ENCODE measurements at regions of chr6 and their contacts with region 1.

Region 1: DNA sequence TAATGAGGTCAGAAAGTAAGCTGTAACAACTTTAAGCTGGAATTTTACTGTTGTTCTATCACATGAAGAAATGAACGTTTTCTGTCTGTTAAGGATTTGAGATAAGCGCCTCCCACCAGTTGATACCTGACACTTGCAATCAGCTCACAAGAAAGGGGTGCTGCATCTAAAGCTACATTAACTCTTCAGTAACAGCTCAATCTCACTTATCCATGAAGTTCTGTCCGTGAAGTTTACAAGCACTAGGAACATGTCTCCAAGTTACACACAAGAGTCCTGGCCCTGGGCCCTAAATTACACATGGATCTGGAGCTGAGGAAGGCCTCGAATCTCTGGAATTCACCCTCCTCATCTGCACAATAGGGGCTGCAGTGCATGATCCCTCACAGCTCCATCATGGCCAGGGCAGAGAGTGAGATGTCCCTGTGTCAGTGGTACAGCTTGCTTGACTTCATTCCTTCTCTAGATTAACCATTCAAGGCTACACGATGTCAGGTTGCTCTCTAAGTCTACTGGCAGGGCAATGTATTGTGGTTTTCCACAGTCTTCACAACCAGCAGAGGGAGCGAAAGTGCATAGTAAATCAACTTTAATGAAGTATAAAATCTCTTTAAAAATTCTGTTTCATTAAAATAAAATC is 182.4 kb upstream of the MCHR2 start:
- DNase-seq: peak; percentile 54
- H3K4me3 ChIP-seq: no peak overlapping the region
- H3K27ac ChIP-seq: no peak overlapping the region
- H3K4me1 ChIP-seq: no peaks in the 10 kb centered on the region
- H3K27me3 ChIP-seq: no peaks in the 10 kb centered on the region
- CTCF ChIP-seq: peak; percentile 29 to 33
- POLR2A ChIP-seq: no peak

Region 2: DNA sequence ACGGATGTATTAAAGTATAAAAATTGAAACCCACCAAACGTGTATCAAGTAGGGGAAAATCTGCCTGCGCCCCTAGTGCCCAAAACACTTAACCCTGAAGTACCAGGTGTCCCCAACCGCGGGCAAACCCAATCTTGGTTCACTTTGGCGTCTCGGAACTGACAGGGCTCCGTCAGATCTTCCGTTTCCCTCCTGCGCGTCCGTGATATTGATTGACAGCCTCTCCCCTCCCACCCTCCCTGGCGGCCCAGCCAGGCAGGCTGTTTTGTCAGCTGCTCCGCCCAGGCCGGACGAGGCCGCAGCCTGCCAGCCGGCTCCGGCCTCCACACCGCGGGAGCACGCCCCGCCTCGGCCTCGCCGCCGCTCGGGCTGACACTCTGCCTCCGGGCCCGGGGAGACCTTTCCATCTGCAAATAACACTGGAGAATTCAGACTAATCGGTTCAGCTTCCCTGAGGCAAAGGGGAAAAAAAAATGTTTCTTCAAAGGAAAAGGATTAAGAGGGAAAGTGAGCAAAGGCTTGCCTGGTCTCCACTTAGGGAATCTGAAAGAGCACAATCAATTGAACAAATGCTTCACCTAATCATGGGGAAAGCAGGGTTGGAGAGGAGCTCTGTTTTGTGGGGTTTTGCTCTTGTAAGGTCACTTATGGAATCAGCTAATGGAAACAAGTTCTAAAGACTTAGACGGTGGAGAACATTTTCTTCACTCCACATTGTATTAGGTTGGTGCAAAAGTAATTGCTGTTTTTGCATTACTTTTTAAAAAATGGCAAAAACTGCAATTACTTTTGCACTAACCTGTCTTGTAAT is 52.6 kb after region 1 on chr6:
- CTCF ChIA-PET with region 1: interaction called, 11 read pairs
- POLR2A ChIA-PET with region 1: no interaction called
- dilution Hi-C with region 1: no loop called
- intact Hi-C with region 1: no loop called
- DNase-seq: peak; percentile 86
- H3K4me3 ChIP-seq: peak overlapping the region; percentile 10 to 65 (median 28)
- H3K27ac ChIP-seq: peak overlapping the region; percentile 81
- H3K4me1 ChIP-seq: peaks cover 35% of the 10 kb centered on the region
- H3K27me3 ChIP-seq: no peaks in the 10 kb centered on the region
- CTCF ChIP-seq: no peak
- POLR2A ChIP-seq: peak; percentile 70

Region 3: DNA sequence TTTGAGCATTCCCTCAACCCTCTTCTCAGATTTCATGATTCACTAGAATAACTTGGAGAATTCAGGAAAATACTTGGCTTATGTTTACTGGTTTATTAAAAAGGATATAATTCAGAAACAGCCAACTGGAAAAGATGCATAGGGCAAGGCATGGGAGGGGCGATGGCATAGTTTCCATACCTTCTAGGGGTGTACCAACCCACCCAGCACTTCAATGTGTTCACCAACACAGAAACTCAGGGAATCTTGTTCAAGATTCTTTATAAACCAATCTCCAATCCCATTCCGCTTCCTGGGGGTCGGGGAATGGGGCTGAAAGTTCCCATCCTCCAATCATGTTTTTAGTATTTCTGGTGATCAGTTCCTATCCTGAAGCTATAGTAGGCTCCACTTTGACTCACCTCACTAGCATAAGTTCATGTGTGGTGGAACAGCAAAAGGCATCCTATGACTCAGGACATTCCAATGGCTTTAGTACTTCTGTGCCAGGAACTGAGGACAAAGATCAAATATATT is 123.8 kb after region 1 on chr6:
- CTCF ChIA-PET with region 1: interaction called, 10 read pairs
- POLR2A ChIA-PET with region 1: no interaction called
- dilution Hi-C with region 1: no loop called
- intact Hi-C with region 1: loop called (anchors 5 kb)
- DNase-seq: peak; percentile 85
- H3K4me3 ChIP-seq: no peak overlapping the region
- H3K27ac ChIP-seq: peak overlapping the region; percentile 100
- H3K4me1 ChIP-seq: peaks cover 74% of the 10 kb centered on the region
- H3K27me3 ChIP-seq: no peaks in the 10 kb centered on the region
- CTCF ChIP-seq: no peak
- POLR2A ChIP-seq: peak; percentile 29

Region 4: DNA sequence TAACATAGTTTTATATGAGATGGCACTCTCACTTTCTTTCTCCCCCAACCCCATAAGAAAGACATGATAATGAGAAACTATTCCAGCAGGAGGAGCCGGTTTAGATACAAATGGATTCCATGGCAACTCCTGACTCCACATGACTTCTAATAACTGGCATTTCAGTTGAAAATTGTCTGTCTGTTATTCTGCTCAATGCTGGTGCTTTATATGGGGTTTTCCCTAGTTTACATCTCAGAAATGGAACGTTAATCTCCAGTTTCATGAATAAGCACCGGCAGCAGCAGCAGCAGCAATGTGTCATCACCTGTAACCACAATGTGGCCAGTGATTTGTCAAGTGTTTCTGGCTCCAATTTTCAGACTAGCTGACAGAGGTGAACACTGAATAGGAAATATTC is 296.2 kb after region 1 on chr6:
- CTCF ChIA-PET with region 1: interaction called, 14 read pairs
- POLR2A ChIA-PET with region 1: no interaction called
- dilution Hi-C with region 1: no loop called
- intact Hi-C with region 1: no loop called
- DNase-seq: no peak
- H3K4me3 ChIP-seq: no peak overlapping the region
- H3K27ac ChIP-seq: no peak overlapping the region
- H3K4me1 ChIP-seq: no peaks in the 10 kb centered on the region
- H3K27me3 ChIP-seq: peaks cover 38 to 62% of the 10 kb centered on the region in 2 experiments
- CTCF ChIP-seq: no peak
- POLR2A ChIP-seq: no peak

Region 5: GRCh38 chr6:100657678-100658330 is 481.4 kb after region 1 on chr6:
- CTCF ChIA-PET with region 1: no interaction called
- POLR2A ChIA-PET with region 1: no interaction called
- dilution Hi-C with region 1: no loop called
- intact Hi-C with region 1: loop called (anchors 2 kb)
- DNase-seq: peak; percentile 39
- H3K4me3 ChIP-seq: no peak overlapping the region
- H3K27ac ChIP-seq: no peak overlapping the region
- H3K4me1 ChIP-seq: no peaks in the 10 kb centered on the region
- H3K27me3 ChIP-seq: no peaks in the 10 kb centered on the region
- CTCF ChIP-seq: peak; percentile 22 to 29
- POLR2A ChIP-seq: no peak

Measured in endothelial cell of umbilical vein (primary cell).